A549 (cell line): ENCODE measurements at regions of chr12 and their contacts with region 1.

Region 1: DNA sequence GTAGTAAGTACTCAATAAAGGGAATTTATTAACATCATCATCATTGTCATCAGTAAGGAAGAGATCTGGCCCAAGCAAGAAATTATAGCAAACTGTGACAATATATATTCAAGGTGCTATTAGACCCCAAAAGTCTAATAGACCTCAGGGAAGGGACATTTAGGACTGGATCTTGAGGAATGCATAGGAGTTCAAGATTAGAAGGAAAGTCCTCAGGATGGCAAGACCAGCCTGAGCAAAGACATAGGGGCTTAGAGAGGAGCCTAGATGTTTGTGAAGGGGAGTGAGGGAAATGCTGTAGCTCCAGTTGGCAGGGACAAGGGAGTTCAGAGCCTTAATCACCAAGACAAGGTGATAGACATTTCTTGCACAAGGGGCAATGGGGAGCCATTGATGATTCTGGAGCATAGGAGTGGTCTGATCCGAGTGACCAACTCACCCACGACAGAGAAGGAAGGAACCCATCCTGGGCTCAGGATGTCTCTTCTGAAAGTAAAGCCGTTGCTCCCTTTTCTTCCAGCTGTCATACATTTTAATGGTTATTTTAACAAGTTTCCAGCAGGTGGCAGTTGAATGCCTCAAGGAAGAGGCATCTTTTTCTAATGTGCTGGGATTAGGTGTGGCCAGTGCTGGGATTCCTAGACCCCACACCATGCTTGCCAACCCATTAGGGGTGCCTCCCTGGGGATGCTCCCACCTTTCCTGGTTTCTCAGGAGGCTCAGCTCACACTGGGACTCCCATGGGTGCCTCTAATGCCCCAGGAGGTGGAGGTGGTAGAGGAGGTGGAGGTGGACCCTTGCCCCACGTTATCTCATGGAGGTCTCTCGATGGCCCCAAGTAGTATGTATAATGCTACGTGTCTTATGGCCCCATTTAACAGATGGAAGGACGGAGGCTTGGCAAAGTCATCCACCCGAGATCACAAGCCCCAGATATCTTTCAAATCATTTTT is 37.8 kb downstream of the PHETA1 start:
- DNase-seq: peak; percentile 74 to 78
- ATAC-seq: peak; percentile 71 to 82
- H3K4me3 ChIP-seq: no peak overlapping the region
- H3K27ac ChIP-seq: no peak overlapping the region
- H3K4me1 ChIP-seq: no peaks in the 10 kb centered on the region
- CTCF ChIP-seq: peak; percentile 64
- EP300 ChIP-seq: no peak
- POLR2A ChIP-seq: no peak
- RAD21 ChIP-seq: peak; percentile 63 to 77; a peak in 4 of 5 replicates

Region 2: DNA sequence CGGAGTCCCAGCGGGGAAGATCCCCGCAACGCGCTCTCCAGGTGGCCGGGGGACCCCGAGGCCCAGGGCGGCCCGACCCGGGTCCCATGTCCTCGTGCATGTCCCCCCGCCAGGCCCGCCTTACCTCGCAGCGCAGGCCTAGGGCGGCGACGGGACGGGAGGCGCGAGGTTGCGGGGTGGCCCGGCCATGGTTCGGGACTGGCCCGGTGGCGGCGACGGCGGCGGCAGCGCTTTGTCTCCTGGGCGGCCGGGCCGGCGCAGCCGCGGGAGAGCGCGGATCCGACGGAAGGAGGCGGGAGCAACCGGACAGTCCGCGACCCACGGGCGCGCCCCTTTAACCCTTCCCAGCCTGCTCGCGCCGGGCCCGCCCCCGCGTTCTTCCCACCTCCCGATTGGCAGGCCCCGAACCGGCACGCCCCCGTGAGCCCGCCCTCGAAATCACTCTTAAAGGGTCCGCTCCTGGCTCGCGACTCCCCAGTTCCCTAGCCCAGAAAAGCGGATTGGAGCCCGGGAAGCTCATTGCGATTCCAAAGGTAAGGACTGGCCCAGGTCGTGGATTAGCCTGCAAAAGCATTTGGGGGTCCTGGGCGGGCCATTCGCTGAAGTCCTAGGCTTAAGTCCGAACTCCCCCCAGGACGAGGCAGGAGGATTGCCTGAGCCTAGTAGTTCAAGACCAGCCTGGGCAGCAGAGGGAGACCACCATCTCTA is 37.9 kb after region 1 on chr12 and contains the start of gene PHETA1:
- CTCF ChIA-PET with region 1: interaction called, 19 read pairs
- POLR2A ChIA-PET with region 1: no interaction called
- DNase-seq: peak; percentile 87 to 94
- ATAC-seq: peak; percentile 95 to 97
- H3K4me3 ChIP-seq: peak within 1 kb of the TSS; percentile 91
- H3K27ac ChIP-seq: peak within 1 kb of the TSS; percentile 76 to 91
- H3K4me1 ChIP-seq: peaks cover 17% of the 10 kb centered on the region
- CTCF ChIP-seq: no peak
- EP300 ChIP-seq: no peak
- POLR2A ChIP-seq: peak; percentile 79
- RAD21 ChIP-seq: no peak
- polyA plus RNA-seq, gene PHETA1: 2.9 and 3.0 TPM in 2 replicates